ENCODE measurements at regions of chr19 and their contacts with region 1.

Region 1: GRCh38 chr19:6862673-6863078 is 24.7 kb upstream of the ADGRE1 start:
- DNase-seq: peak; percentile 75 to 92 (median 86)
- H3K4me3 ChIP-seq: peak overlapping the region in 1 of 4 donors; percentile 32
- H3K27ac ChIP-seq: no peak overlapping the region
- H3K4me1 ChIP-seq: peaks cover 5 to 6% of the 10 kb centered on the region in 2 donors
- H3K27me3 ChIP-seq: no peaks in the 10 kb centered on the region
- CTCF ChIP-seq: peak; percentile 76 to 91 (median 87)
- POLR2A ChIP-seq: no peak

Region 2: GRCh38 chr19:6516659-6517291 is 345.9 kb before region 1 on chr19:
- intact Hi-C with region 1: loop called in 1 of 2 experiments (anchors 5 kb)
- DNase-seq: peak; percentile 90 to 95 (median 93)
- H3K4me3 ChIP-seq: peak overlapping the region in 2 of 4 donors; percentile 38 to 65
- H3K27ac ChIP-seq: peak overlapping the region; percentile 10 to 93 (median 75)
- H3K4me1 ChIP-seq: peaks cover 7 to 12% of the 10 kb centered on the region in 2 donors
- H3K27me3 ChIP-seq: no peaks in the 10 kb centered on the region
- CTCF ChIP-seq: peak; percentile 92 to 97 (median 96)
- POLR2A ChIP-seq: no peak

Region 3: GRCh38 chr19:6632002-6632621 is 230.6 kb before region 1 on chr19:
- intact Hi-C with region 1: loop called (anchors 5 to 10 kb)
- DNase-seq: peak; percentile 59 to 87 (median 79)
- H3K4me3 ChIP-seq: no peak overlapping the region
- H3K27ac ChIP-seq: peak overlapping the region in 1 of 5 donors; percentile 80
- H3K4me1 ChIP-seq: no peaks in the 10 kb centered on the region
- H3K27me3 ChIP-seq: peaks cover 5% of the 10 kb centered on the region
- CTCF ChIP-seq: peak; percentile 72 to 85 (median 76)
- POLR2A ChIP-seq: no peak

Region 4: DNA sequence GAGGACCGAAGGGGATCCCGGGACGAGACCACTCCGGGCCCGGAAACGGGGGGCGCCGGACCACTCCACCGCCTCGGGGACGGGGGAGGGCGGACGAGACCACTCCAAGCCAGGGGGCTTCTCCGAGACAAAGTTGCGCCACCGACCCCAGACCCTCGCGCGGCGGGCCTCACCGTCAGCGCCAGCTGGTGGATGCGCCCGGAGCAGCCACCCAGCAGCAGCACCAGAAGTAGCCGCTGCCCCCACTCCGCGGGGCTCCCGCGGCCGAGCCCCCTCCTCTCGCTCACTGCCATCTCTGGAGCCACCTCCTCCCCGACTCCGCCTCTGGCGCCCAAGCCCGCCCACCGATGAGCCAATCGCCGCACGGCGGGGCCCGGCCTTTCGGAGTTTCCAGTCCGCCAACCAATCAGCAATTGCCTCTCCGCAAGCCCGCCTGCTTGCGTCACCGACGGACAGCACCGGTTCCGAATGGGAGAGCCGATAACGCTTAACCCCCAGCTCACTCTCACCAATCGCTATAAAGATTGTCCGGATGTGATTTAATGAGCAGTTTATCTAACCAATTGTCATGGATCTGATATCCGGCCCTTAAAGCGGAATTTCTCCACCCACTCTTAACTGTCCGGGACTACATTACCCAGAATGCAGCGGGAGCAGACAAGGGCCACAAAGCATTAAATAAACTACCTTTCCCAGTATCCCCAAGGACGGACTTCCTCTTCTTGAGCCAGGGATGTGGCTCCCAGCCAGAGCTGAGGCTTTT is 125.2 kb before region 1 on chr19 and contains the start of gene GPR108:
- intact Hi-C with region 1: loop called in 1 of 2 experiments (anchors 10 kb)
- DNase-seq: peak; percentile 99 to 100 (median 100)
- H3K4me3 ChIP-seq: peak within 1 kb of the TSS; percentile 50 to 96 (median 80)
- H3K27ac ChIP-seq: peak within 1 kb of the TSS; percentile 90 to 98 (median 91)
- H3K4me1 ChIP-seq: peaks cover 26 to 41% of the 10 kb centered on the region in 2 donors
- H3K27me3 ChIP-seq: no peaks in the 10 kb centered on the region
- CTCF ChIP-seq: peak in 1 of 6 experiments; percentile 10
- POLR2A ChIP-seq: peak; percentile 49 to 63
- total RNA-seq, gene GPR108: 61.8 to 168 (median 122) TPM

Region 5: DNA sequence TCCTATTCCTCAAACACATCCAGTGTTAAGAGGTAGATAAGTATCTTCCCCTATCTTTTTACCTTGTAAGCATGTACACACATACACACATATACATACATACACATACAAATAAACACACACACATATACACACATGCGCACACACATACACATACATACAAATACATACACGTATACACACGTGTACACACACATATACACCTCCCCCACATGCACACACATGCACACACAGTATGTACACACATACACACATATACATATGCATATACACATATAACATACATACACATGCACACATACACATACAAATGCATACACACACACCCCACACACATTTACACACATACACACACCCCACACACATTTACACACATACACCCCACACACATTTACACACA is 48.8 kb after region 1 on chr19:
- intact Hi-C with region 1: no loop called
- DNase-seq: no peak
- H3K4me3 ChIP-seq: no peak overlapping the region
- H3K27ac ChIP-seq: no peak overlapping the region
- H3K4me1 ChIP-seq: no peaks in the 10 kb centered on the region
- H3K27me3 ChIP-seq: no peaks in the 10 kb centered on the region
- CTCF ChIP-seq: no peak
- POLR2A ChIP-seq: no peak

Region 6: DNA sequence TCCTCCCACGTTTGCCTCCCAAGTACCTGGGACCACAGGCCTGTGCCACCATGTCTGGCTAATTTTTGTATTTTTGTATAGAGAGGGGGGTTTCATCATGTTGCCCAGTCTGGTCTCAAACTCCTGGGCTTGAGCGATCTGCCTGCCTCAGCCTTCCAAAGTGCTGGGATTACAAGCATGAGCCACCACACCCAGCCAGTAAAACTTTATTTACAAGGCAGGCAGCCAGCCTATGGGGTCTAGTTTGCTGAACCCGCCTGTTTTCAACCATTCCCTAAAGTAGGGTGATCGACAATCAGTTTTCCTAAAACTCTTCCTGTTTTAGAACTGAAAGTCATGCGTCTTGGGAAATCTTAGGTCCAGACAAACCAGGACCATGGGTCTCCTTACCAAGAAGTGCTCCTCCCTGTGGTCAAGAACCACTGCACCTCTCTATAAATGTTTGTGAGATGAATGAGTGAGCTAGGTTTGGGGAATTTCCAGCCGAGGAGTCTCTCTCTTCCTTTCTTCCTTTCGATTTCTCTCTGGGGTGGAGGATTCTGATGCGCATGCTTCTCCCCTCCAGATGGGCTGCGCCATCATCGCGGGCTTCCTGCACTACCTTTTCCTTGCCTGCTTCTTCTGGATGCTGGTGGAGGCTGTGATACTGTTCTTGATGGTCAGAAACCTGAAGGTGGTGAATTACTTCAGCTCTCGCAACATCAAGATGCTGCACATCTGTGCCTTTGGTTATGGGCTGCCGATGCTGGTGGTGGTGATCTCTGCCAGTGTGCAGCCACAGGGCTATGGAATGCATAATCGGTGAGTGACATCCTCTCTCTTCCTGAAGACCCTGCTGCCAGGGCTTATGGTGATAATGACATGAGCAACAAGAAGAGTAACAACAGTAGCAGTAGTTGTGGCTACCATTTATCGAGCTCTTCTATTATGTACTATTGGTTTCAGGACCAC is 63.4 kb after region 1 on chr19:
- intact Hi-C with region 1: no loop called
- DNase-seq: no peak
- H3K4me3 ChIP-seq: no peak overlapping the region
- H3K27ac ChIP-seq: no peak overlapping the region
- H3K4me1 ChIP-seq: no peaks in the 10 kb centered on the region
- H3K27me3 ChIP-seq: no peaks in the 10 kb centered on the region
- CTCF ChIP-seq: no peak
- POLR2A ChIP-seq: no peak

Measured in adrenal gland (tissue), 19 donors.